A549 (cell line): ENCODE measurements at regions of chr20 and their contacts with region 1.

Region 1: DNA sequence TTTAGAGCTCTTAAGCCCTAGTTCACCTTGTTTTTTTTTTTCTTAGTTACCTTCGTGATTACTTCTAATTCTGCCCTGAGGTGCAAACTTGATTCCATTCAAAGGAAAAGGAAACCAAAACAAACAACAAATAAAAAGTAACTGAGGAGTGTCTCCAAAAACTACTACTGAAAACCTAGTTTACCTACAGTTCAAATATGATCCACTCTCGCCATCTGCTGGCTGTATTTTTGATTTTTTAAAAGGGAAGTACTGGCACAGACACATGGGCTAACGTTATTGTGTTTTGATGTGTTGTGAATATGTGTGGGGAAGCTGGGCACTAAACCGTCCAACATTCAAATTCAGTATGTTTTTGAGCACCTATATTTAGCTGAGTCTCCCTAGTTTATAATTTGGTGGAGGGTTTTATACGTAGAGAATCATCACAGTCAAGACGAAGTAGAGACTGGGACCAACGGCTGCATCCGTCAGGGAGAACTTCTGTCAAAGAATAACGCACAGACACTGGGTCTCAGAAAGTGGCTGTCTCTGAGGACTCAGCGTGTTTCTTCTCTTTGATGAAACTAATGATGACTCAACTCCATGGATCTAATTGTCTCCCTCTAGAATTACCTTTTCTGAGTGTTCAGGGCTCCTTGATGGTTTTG is 373.5 kb upstream of the BTBD3 start:
- DNase-seq: peak; percentile 55 to 84
- ATAC-seq: peak; percentile 85 to 93
- H3K4me3 ChIP-seq: no peak overlapping the region
- H3K27ac ChIP-seq: peak overlapping the region; percentile 75 to 83
- H3K4me1 ChIP-seq: peaks cover 22% of the 10 kb centered on the region
- CTCF ChIP-seq: peak; percentile 95
- EP300 ChIP-seq: no peak
- POLR2A ChIP-seq: no peak
- RAD21 ChIP-seq: peak; percentile 98

Region 2: DNA sequence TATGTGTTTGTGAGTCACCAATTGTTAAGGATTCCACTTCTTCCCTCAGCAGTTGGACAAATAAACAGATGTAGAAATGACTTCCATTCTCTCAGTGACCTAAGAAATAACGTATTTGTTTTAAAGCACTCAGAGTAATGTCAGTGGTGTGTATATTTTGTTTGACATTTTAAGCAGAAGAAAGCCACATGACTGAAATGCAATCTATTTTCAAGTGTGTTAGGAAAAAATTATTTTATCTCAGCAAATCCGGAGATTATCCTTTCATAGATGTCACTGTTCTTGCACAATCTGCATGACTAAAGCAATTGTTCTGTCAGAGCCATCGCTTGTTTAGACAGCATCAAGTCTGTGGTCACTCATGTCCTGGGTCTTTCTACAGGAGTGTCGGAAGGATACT is 947.4 kb before region 1 on chr20:
- CTCF ChIA-PET with region 1: interaction called, 10 read pairs
- POLR2A ChIA-PET with region 1: no interaction called
- DNase-seq: peak; percentile 56 to 76
- ATAC-seq: peak; percentile 31 to 65; a peak in 4 of 6 replicates
- H3K4me3 ChIP-seq: no peak overlapping the region
- H3K27ac ChIP-seq: peak overlapping the region; percentile 72 to 86
- H3K4me1 ChIP-seq: peaks cover 73% of the 10 kb centered on the region
- CTCF ChIP-seq: no peak
- EP300 ChIP-seq: no peak; a peak in 2 of 5 replicates
- POLR2A ChIP-seq: no peak
- RAD21 ChIP-seq: no peak

Region 3: DNA sequence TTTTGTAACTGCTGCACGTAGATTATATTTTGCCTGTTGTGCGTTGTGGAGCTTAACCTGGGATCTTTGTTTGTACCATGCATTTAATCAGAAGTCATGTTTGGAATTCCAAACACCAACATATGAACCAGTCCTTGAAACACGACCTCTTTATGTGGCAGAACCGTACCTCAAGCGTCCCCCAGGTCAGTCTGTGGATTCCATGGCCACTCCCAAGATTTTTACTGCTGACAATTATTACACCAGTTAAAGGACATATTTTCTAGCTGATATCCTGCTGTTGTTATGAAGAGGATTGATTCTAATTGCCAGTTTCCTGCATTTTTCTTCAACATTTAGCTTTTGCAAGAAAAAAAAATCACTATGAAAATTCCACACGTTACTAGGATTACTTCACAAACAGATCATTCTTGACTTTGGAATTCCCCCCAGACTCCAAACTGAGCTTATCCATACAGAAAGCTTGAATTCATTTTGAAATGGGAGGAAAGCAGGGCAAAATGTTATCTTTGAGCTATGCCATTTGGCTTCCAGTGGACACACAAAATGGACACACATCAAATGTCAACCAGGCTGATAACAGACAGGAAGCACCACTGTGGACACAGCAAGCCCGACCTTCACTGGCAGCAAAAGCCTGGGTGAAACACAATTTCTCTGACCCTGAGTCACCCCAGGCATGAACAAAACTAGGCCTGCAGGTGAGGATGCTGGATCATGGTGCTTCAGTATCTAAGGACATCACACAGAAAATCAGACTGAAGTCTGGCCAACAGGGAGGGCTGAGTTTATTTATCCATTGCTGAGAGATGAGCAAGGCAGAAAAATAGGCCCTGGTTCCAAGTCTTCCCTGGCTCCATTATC is 327.5 kb before region 1 on chr20:
- CTCF ChIA-PET with region 1: interaction called, 22 read pairs
- POLR2A ChIA-PET with region 1: no interaction called
- DNase-seq: peak; percentile 16 to 81
- ATAC-seq: peak; percentile 69 to 91
- H3K4me3 ChIP-seq: no peak overlapping the region
- H3K27ac ChIP-seq: peak overlapping the region; percentile 70 to 85
- H3K4me1 ChIP-seq: peaks cover 34% of the 10 kb centered on the region
- CTCF ChIP-seq: no peak
- EP300 ChIP-seq: peak in 1 of 2 experiments; percentile 78; a peak in 4 of 5 replicates
- POLR2A ChIP-seq: no peak
- RAD21 ChIP-seq: peak; percentile 21 to 36; a peak in 2 of 5 replicates

Region 4: GRCh38 chr20:11274141-11274594 is 270.0 kb before region 1 on chr20:
- CTCF ChIA-PET with region 1: interaction called, 16 read pairs
- POLR2A ChIA-PET with region 1: no interaction called
- DNase-seq: peak; percentile 86 to 90
- ATAC-seq: peak; percentile 93 to 95
- H3K4me3 ChIP-seq: no peak overlapping the region
- H3K27ac ChIP-seq: peak overlapping the region; percentile 62 to 70
- H3K4me1 ChIP-seq: peaks cover 36% of the 10 kb centered on the region
- CTCF ChIP-seq: peak; percentile 96
- EP300 ChIP-seq: no peak
- POLR2A ChIP-seq: no peak
- RAD21 ChIP-seq: peak; percentile 99 to 100

Region 5: DNA sequence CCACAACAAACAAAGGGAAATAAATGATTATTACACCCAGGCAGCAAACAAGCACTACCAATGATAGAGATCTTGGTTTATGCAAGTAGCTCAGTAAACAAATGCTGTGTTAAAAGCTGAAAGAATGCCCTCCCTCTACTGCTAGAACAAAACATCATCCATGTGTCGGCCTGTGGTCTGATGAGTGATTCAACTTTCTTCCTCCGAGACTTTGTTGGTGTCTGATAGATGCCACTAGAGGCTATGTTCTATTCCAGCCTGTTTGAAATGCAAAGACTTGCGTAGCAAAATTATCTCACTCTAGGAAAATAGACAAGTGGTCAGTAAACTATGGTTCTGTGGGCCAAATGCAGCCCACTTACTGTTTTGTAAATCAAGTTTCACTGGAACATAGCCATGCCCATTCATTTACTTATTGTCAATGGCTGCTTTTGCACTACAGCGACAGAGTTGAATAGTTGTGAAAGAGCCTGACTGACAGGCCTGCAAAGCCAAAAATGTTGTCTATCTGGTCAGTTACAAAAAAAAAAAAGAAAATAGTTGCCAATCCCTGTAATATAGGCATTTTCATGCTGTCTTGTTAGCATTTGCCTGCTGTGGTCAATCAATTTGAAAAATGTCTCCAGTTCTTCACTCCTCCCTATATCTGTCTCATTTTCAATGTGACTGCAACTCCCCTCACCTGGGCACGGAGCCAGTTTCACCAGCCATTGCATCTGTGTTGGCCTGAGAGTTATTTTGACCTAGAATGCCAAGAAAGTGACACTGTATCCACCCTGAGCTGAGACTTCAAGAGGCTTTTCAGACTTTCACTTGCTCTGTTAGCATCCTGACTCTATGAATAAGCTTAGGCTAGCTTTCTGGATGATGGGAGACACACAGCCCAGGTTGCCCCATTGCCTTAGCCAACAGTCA is 171.0 kb before region 1 on chr20:
- CTCF ChIA-PET with region 1: no interaction called
- POLR2A ChIA-PET with region 1: no interaction called
- DNase-seq: no peak
- ATAC-seq: no peak
- H3K4me3 ChIP-seq: no peak overlapping the region
- H3K27ac ChIP-seq: peak overlapping the region; percentile 43 to 71; a peak in 4 of 6 replicates
- H3K4me1 ChIP-seq: peaks cover 43% of the 10 kb centered on the region
- CTCF ChIP-seq: no peak
- EP300 ChIP-seq: no peak
- POLR2A ChIP-seq: no peak
- RAD21 ChIP-seq: no peak

Region 6: GRCh38 chr20:11387189-11387754 is 156.9 kb before region 1 on chr20:
- CTCF ChIA-PET with region 1: interaction called, 13 read pairs
- POLR2A ChIA-PET with region 1: no interaction called
- DNase-seq: peak; percentile 43 to 93
- ATAC-seq: peak; percentile 94 to 99
- H3K4me3 ChIP-seq: no peak overlapping the region
- H3K27ac ChIP-seq: peak overlapping the region; percentile 86 to 90
- H3K4me1 ChIP-seq: peaks cover 30% of the 10 kb centered on the region
- CTCF ChIP-seq: no peak
- EP300 ChIP-seq: peak; percentile 96 to 97
- POLR2A ChIP-seq: no peak
- RAD21 ChIP-seq: peak; percentile 53 to 77